ENCODE measurements at regions of chr13 and their contacts with region 1.

Region 1: DNA sequence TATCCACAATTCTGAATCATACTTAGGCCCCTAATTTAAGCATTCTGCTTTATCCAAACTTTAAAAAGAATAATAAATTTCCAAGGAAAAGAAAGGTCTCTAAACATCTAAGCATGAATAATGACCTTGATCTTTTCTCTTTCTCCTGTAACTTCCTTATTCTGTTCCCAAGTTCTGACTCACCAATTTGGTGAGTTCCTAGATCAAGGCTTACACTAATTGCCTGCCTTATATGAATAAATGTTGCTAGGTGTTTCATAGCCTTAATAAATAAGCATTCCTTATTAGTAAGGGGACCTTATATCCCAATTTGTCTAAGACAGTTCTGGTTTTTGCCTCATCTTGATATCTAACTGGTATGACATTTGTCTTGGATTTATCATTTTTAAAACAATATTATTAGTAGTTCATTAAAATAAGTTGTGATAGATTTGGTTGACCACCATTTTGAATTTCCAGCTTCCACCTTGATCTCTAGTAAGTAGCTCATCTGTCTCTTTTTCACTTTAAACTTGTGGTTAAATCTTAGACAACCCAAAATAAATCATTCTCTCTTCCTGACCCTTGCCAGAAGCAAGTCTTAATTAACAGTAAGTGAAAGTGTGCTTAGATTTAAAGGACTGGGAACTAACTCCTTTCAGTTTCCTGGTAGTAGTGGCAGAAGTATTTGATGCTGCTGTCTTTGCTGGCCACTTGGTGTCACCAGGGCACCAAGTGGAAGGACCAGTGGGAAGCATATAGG is 121.2 kb upstream of the MLNR start:
- DNase-seq: peak; percentile 17
- H3K4me3 ChIP-seq: no peak overlapping the region
- H3K27ac ChIP-seq: no peak overlapping the region
- H3K4me1 ChIP-seq: no peaks in the 10 kb centered on the region
- CTCF ChIP-seq: peak; percentile 63

Region 2: DNA sequence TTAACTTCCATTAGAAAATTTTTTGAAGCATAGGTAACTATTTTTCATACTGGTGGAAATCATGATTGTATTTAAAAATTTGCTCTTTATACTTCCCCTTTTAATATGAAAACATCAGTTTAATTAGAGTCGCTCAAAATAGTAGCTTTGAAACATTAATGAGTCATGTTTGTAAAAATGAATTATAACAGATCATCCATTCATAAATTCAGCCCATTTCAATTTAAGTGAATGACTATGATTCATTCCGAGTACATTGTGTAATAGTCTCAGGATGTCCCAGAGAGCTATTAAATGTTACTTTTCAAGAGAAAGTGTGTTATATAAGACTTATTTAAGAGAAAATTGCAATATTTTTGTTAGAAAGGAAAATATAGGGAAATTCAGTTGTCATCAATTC is 12.2 kb before region 1 on chr13:
- CTCF ChIA-PET with region 1: no interaction called
- POLR2A ChIA-PET with region 1: interaction called, 12 read pairs
- intact Hi-C with region 1: no loop called
- DNase-seq: no peak
- H3K4me3 ChIP-seq: no peak overlapping the region
- H3K27ac ChIP-seq: no peak overlapping the region
- H3K4me1 ChIP-seq: no peaks in the 10 kb centered on the region
- CTCF ChIP-seq: no peak

Region 3: DNA sequence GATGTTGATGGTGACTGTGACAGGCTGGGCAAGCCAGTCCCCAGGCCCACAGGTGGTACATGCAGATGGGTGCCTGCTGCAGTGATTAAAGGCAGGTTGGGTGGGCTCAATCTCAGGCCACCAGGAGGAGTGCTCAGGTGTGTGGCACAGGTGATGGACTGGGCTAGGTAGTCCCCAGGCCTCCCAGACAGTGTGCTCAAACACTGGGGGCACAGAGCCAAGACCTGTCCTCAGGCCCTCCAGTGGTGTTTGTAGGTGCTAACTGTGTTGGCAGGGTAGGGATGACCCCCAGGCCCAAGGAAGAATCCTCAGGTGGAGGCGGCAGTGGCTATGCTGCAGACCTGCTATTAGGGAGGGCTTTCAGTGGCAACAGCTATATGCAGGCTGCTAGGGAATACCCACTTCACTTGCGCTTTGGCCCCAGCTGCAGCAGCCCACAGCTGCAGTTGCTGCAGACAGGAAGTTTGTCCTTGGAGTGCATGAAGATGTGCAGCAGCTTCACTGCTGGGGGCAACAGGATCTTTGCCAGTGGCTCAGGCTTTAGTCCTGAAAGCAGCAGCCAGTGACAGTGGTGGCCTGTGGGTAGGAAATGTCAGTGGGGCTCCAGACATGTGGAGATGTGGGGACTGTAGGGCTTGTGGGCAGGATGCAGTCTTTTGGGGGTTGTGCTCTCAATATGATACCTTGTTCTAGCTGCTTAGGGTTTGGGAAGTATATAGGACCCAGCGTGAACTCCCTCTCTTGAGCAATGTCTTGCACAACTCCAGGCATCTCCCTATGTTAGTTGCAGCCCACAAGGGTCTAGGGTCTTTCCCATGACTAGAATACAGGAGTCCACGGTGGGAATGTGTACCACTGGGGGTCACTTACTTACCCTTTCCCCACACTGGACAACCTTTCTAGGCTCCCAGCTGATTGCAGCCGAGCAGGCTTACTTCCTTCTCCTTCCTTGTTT is 67.1 kb after region 1 on chr13:
- CTCF ChIA-PET with region 1: no interaction called
- POLR2A ChIA-PET with region 1: no interaction called
- intact Hi-C with region 1: no loop called
- DNase-seq: peak; percentile 12
- H3K4me3 ChIP-seq: no peak overlapping the region
- H3K27ac ChIP-seq: no peak overlapping the region
- H3K4me1 ChIP-seq: no peaks in the 10 kb centered on the region
- CTCF ChIP-seq: no peak

Region 4: DNA sequence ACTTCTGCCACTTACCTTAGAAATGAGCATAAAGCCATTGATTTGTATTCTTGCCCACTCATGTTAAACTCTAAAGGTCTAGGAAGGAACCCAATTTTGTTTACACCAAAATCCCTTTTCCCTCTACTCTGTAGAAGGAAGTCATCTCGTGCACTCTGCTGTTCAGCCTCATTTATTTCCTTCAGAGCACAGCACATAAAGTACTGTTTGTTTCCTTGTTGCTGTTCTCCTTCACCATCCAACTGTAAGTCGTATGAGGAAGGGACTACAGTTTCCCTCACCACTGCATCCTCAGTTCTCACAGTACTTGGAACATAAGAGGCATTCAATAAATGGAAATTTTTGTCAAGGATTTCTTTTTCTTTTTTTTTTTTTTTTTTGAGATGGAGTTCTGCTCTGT is 173.4 kb after region 1 on chr13:
- CTCF ChIA-PET with region 1: no interaction called
- POLR2A ChIA-PET with region 1: no interaction called
- intact Hi-C with region 1: loop called (anchors 10 kb)
- DNase-seq: no peak
- H3K4me3 ChIP-seq: no peak overlapping the region
- H3K27ac ChIP-seq: no peak overlapping the region
- H3K4me1 ChIP-seq: no peaks in the 10 kb centered on the region
- CTCF ChIP-seq: no peak

Measured in OCI-LY7 (cell line).